B cell (primary cell): ENCODE measurements at regions of chr2 and their contacts with region 1.

Region 1: GRCh38 chr2:224650815-224651439 is 65.2 kb downstream of the CCDC195 start:
- DNase-seq: peak; percentile 70
- ATAC-seq: peak; percentile 67
- H3K4me3 ChIP-seq: no peak overlapping the region
- H3K4me3 Mint-ChIP-seq: no peak overlapping the region
- H3K27ac ChIP-seq: no peak overlapping the region
- H3K27ac Mint-ChIP-seq: no peak overlapping the region
- H3K4me1 ChIP-seq: no peaks in the 10 kb centered on the region
- H3K4me1 Mint-ChIP-seq: peaks cover 8% of the 10 kb centered on the region
- H3K27me3 ChIP-seq: no peaks in the 10 kb centered on the region
- H3K27me3 Mint-ChIP-seq: no peaks in the 10 kb centered on the region
- CTCF ChIP-seq: peak; percentile 89

Region 2: GRCh38 chr2:224357098-224357901 is 293.6 kb before region 1 on chr2:
- CTCF ChIA-PET with region 1: interaction called, 101 read pairs
- POLR2A ChIA-PET with region 1: no interaction called
- intact Hi-C with region 1: loop called (anchors 1 kb)
- DNase-seq: peak; percentile 79
- ATAC-seq: peak; percentile 81
- H3K4me3 ChIP-seq: no peak overlapping the region
- H3K4me3 Mint-ChIP-seq: no peak overlapping the region
- H3K27ac ChIP-seq: no peak overlapping the region
- H3K27ac Mint-ChIP-seq: no peak overlapping the region
- H3K4me1 ChIP-seq: no peaks in the 10 kb centered on the region
- H3K4me1 Mint-ChIP-seq: no peaks in the 10 kb centered on the region
- H3K27me3 ChIP-seq: no peaks in the 10 kb centered on the region
- H3K27me3 Mint-ChIP-seq: peaks cover 11% of the 10 kb centered on the region
- CTCF ChIP-seq: peak; percentile 87

Region 3: GRCh38 chr2:224469374-224469964 is 181.5 kb before region 1 on chr2:
- CTCF ChIA-PET with region 1: interaction called, 4 read pairs
- POLR2A ChIA-PET with region 1: no interaction called
- intact Hi-C with region 1: loop called (anchors 5 kb)
- DNase-seq: no peak
- ATAC-seq: no peak
- H3K4me3 ChIP-seq: no peak overlapping the region
- H3K4me3 Mint-ChIP-seq: no peak overlapping the region
- H3K27ac ChIP-seq: no peak overlapping the region
- H3K27ac Mint-ChIP-seq: no peak overlapping the region
- H3K4me1 ChIP-seq: no peaks in the 10 kb centered on the region
- H3K4me1 Mint-ChIP-seq: peaks cover 2% of the 10 kb centered on the region
- H3K27me3 ChIP-seq: no peaks in the 10 kb centered on the region
- H3K27me3 Mint-ChIP-seq: no peaks in the 10 kb centered on the region
- CTCF ChIP-seq: no peak

Region 4: DNA sequence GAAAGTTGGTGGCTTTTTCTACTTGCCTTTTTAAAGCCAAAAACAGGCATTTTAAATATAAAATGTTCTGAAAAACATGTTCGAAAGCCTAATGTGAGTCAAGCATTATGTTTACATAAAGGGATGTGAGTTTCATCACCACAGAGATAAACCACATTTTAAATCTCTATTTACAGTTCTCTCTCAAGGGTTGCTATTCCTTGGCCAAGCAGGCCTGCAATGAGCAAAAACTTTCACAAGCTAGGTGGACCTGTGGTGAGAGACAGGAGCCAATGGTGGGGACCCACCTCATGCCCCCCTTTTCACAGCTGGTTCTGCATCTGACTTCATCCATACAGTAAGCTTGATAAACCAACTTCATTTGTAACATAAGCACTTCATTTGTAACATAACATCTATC is 130.9 kb before region 1 on chr2:
- CTCF ChIA-PET with region 1: interaction called, 18 read pairs
- POLR2A ChIA-PET with region 1: interaction called, 3 read pairs
- intact Hi-C with region 1: no loop called
- DNase-seq: peak; percentile 33
- ATAC-seq: no peak
- H3K4me3 ChIP-seq: peak overlapping the region in 1 of 5 experiments; percentile 81
- H3K4me3 Mint-ChIP-seq: peak overlapping the region; percentile 81
- H3K27ac ChIP-seq: peak overlapping the region; percentile 87 to 89
- H3K27ac Mint-ChIP-seq: peak overlapping the region; percentile 91
- H3K4me1 ChIP-seq: peaks cover 73 to 78% of the 10 kb centered on the region in 2 donors
- H3K4me1 Mint-ChIP-seq: peaks cover 70% of the 10 kb centered on the region
- H3K27me3 ChIP-seq: no peaks in the 10 kb centered on the region
- H3K27me3 Mint-ChIP-seq: no peaks in the 10 kb centered on the region
- CTCF ChIP-seq: no peak

Region 5: GRCh38 chr2:224601923-224602322 is 49.0 kb before region 1 on chr2:
- CTCF ChIA-PET with region 1: interaction called, 13 read pairs
- POLR2A ChIA-PET with region 1: no interaction called
- intact Hi-C with region 1: no loop called
- DNase-seq: no peak
- ATAC-seq: no peak
- H3K4me3 ChIP-seq: no peak overlapping the region
- H3K4me3 Mint-ChIP-seq: no peak overlapping the region
- H3K27ac ChIP-seq: no peak overlapping the region
- H3K27ac Mint-ChIP-seq: no peak overlapping the region
- H3K4me1 ChIP-seq: peaks cover 0 to 4% of the 10 kb centered on the region in 2 donors
- H3K4me1 Mint-ChIP-seq: peaks cover 9% of the 10 kb centered on the region
- H3K27me3 ChIP-seq: no peaks in the 10 kb centered on the region
- H3K27me3 Mint-ChIP-seq: no peaks in the 10 kb centered on the region
- CTCF ChIP-seq: no peak

Region 6: GRCh38 chr2:224630659-224631550 is 20.0 kb before region 1 on chr2:
- CTCF ChIA-PET with region 1: interaction called, 102 read pairs
- POLR2A ChIA-PET with region 1: interaction called, 3 read pairs
- intact Hi-C with region 1: no loop called
- DNase-seq: no peak
- ATAC-seq: no peak
- H3K4me3 ChIP-seq: no peak overlapping the region
- H3K4me3 Mint-ChIP-seq: no peak overlapping the region
- H3K27ac ChIP-seq: no peak overlapping the region
- H3K27ac Mint-ChIP-seq: no peak overlapping the region
- H3K4me1 ChIP-seq: no peaks in the 10 kb centered on the region
- H3K4me1 Mint-ChIP-seq: no peaks in the 10 kb centered on the region
- H3K27me3 ChIP-seq: no peaks in the 10 kb centered on the region
- H3K27me3 Mint-ChIP-seq: no peaks in the 10 kb centered on the region
- CTCF ChIP-seq: no peak

Region 7: GRCh38 chr2:224778474-224778877 is 127.5 kb after region 1 on chr2:
- CTCF ChIA-PET with region 1: interaction called, 64 read pairs
- POLR2A ChIA-PET with region 1: no interaction called
- intact Hi-C with region 1: loop called (anchors 1 kb)
- DNase-seq: peak; percentile 72
- ATAC-seq: no peak
- H3K4me3 ChIP-seq: no peak overlapping the region
- H3K4me3 Mint-ChIP-seq: no peak overlapping the region
- H3K27ac ChIP-seq: no peak overlapping the region
- H3K27ac Mint-ChIP-seq: no peak overlapping the region
- H3K4me1 ChIP-seq: no peaks in the 10 kb centered on the region
- H3K4me1 Mint-ChIP-seq: no peaks in the 10 kb centered on the region
- H3K27me3 ChIP-seq: no peaks in the 10 kb centered on the region
- H3K27me3 Mint-ChIP-seq: no peaks in the 10 kb centered on the region
- CTCF ChIP-seq: peak; percentile 97